Naive thymus-derived CD8-positive, alpha-beta T cell (primary cell): ENCODE measurements at regions of chr21 and their contacts with region 1.

Region 1: GRCh38 chr21:42781150-42781970 is 98.0 kb downstream of the WDR4 start:
- DNase-seq: peak in 1 of 10 donors; percentile 9
- ATAC-seq: no peak
- H3K4me3 Mint-ChIP-seq: peak overlapping the region; percentile 22 to 91 (median 69)
- H3K27ac Mint-ChIP-seq: peak overlapping the region; percentile 57 to 99 (median 82)
- H3K4me1 Mint-ChIP-seq: peaks cover 27 to 57% (median 52%) of the 10 kb centered on the region in 4 donors
- H3K27me3 Mint-ChIP-seq: no peaks in the 10 kb centered on the region

Region 2: GRCh38 chr21:42652527-42653230 is 128.7 kb before region 1 on chr21:
- POLR2A ChIA-PET with region 1: interaction called, 29 read pairs
- DNase-seq: peak in 1 of 10 donors; percentile 62
- ATAC-seq: no peak
- H3K4me3 Mint-ChIP-seq: peak overlapping the region; percentile 71 to 90 (median 81)
- H3K27ac Mint-ChIP-seq: peak overlapping the region in 9 of 10 donors; percentile 20 to 84 (median 46)
- H3K4me1 Mint-ChIP-seq: peaks cover 20 to 32% (median 27%) of the 10 kb centered on the region in 4 donors
- H3K27me3 Mint-ChIP-seq: peaks cover 0 to 11% (median 0%) of the 10 kb centered on the region in 5 donors

Region 3: GRCh38 chr21:42737951-42738590 is 43.3 kb before region 1 on chr21:
- POLR2A ChIA-PET with region 1: interaction called, 17 read pairs
- DNase-seq: peak in 7 of 10 donors; percentile 6 to 72 (median 31)
- ATAC-seq: peak; percentile 92
- H3K4me3 Mint-ChIP-seq: peak overlapping the region in 9 of 10 donors; percentile 69 to 87 (median 81)
- H3K27ac Mint-ChIP-seq: peak overlapping the region; percentile 74 to 100 (median 99)
- H3K4me1 Mint-ChIP-seq: peaks cover 18 to 61% (median 60%) of the 10 kb centered on the region in 4 donors
- H3K27me3 Mint-ChIP-seq: no peaks in the 10 kb centered on the region

Region 4: GRCh38 chr21:42746593-42747275 is 34.6 kb before region 1 on chr21:
- POLR2A ChIA-PET with region 1: interaction called, 85 read pairs
- DNase-seq: peak; percentile 30 to 85 (median 64)
- ATAC-seq: peak; percentile 80 to 83
- H3K4me3 Mint-ChIP-seq: peak overlapping the region; percentile 74 to 88 (median 81)
- H3K27ac Mint-ChIP-seq: peak overlapping the region; percentile 95 to 100 (median 98)
- H3K4me1 Mint-ChIP-seq: peaks cover 15 to 46% (median 36%) of the 10 kb centered on the region in 4 donors
- H3K27me3 Mint-ChIP-seq: no peaks in the 10 kb centered on the region

Region 5: GRCh38 chr21:42769820-42770716 is 11.3 kb before region 1 on chr21:
- POLR2A ChIA-PET with region 1: interaction called, 11 read pairs
- DNase-seq: peak in 1 of 10 donors; percentile 35
- ATAC-seq: no peak
- H3K4me3 Mint-ChIP-seq: no peak overlapping the region
- H3K27ac Mint-ChIP-seq: peak overlapping the region in 1 of 10 donors; percentile 72
- H3K4me1 Mint-ChIP-seq: peaks cover 0 to 4% (median 0%) of the 10 kb centered on the region in 4 donors
- H3K27me3 Mint-ChIP-seq: no peaks in the 10 kb centered on the region